ENCODE measurements at regions of chr17 and their contacts with region 1.

Region 1: DNA sequence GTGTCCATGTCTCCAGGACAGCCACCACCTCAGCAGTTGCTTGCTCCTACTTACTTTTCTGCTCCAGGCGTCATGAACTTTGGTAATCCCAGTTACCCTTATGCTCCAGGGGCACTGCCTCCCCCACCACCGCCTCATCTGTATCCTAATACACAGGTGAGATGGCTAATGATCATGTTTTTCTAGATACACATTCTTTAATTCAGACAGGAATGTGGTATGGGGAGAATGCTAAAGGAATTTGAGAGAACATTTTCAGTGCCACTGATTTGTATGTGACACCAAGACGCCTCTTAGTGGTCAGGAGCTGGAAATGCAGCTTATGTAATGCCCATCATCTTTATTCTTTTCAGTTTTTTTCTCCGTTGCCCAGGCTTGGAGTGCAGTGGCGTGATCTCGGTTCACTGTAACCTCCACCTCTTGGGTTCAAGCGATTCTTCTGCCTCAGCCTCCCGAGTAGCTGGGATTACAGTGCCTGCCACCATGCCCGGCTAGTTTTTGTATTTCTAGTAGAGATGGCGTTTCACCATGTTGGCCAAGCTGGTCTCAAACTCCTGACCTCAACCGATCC is 8.9 kb upstream of the RAPGEFL1 start:
- DNase-seq: peak; percentile 88
- H3K4me3 Mint-ChIP-seq: no peak overlapping the region
- H3K27ac Mint-ChIP-seq: peak overlapping the region; percentile 4
- H3K4me1 Mint-ChIP-seq: peaks cover 17% of the 10 kb centered on the region
- H3K27me3 Mint-ChIP-seq: no peaks in the 10 kb centered on the region
- CTCF ChIP-seq: no peak

Region 2: DNA sequence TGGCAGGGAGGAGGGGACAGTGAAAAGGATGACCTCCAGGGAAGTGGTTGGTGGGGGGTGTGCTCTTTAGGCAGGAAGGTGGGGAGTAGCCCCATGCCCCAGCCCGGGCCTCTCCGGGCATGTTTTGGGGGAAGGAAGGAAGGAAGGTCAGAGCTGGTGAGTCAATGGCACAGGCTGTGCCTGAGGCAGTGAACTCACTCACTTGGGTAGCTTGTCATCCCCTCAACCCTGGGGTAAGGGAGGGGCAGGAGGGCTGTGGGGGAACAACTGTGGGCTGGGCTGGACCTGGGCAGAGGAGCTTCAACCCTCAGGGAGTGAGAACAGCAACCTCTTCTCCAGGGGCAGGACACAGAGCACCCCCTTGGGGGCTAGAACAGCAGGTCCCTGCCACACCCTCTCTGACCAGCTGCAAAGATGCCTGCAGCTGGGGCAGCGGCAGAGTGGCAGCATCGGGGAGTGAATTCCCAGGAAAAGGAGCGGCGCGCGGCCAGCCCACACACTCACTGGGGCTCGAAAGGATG is 146.8 kb before region 1 on chr17:
- CTCF ChIA-PET with region 1: interaction called, 24 read pairs
- intact Hi-C with region 1: no loop called
- DNase-seq: peak; percentile 88
- H3K4me3 Mint-ChIP-seq: no peak overlapping the region
- H3K27ac Mint-ChIP-seq: no peak overlapping the region
- H3K4me1 Mint-ChIP-seq: peaks cover 36% of the 10 kb centered on the region
- H3K27me3 Mint-ChIP-seq: peaks cover 23% of the 10 kb centered on the region
- CTCF ChIP-seq: no peak

Region 3: DNA sequence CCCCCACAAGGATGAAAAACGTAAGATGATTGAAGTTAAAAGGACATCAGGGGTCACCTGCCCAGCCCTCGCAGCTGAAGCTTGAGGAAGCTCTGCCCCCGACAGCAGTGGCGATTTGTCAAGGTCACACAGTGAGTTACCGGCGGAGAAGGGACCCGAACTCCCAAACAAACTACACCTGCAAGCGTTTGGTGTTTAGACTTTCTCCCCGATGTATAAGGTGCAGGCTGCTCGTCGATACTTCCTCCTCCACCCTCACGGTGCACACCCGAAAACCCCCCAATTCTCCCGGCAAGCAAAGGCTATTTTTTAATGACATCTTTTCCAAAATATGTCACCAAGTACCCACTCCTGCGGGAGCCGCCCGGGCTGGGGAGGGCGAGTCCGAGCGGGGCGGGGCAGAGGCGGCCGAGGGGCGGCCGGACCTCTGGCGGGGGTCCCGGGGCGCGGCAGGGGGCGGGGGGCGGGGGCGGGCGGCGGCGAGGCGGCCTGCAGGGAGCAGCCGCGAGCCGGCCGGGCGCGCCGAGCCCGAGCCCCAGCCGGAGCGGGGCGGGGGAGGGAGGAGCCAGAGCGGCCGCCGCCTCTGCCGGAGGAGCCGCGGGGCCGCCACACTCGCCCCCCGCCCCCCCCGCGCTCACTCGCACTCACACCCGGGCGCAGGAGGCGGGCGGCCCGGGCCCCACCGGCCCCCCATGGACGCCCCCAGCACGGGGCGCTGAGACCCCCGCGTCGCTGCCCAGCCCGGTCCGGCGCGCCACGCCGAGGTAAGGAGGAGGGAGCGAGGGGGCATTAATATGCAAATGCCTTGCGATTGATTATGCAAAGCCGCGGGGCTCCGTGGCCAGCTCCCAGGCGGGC is 105.8 kb before region 1 on chr17 and contains the start of gene THRA:
- CTCF ChIA-PET with region 1: interaction called, 11 read pairs
- intact Hi-C with region 1: loop called (anchors 1 kb)
- DNase-seq: peak; percentile 100
- H3K4me3 Mint-ChIP-seq: peak within 1 kb of the TSS; percentile 54
- H3K27ac Mint-ChIP-seq: peak within 1 kb of the TSS; percentile 27
- H3K4me1 Mint-ChIP-seq: peaks cover 55% of the 10 kb centered on the region
- H3K27me3 Mint-ChIP-seq: peaks cover 52% of the 10 kb centered on the region
- CTCF ChIP-seq: no peak
- total RNA-seq, gene THRA: 107 and 133 TPM in 2 replicates

Region 4: GRCh38 chr17:40086150-40087044 is 82.0 kb before region 1 on chr17:
- CTCF ChIA-PET with region 1: interaction called, 19 read pairs
- intact Hi-C with region 1: no loop called
- DNase-seq: peak; percentile 100
- H3K4me3 Mint-ChIP-seq: no peak overlapping the region
- H3K27ac Mint-ChIP-seq: no peak overlapping the region
- H3K4me1 Mint-ChIP-seq: no peaks in the 10 kb centered on the region
- H3K27me3 Mint-ChIP-seq: no peaks in the 10 kb centered on the region
- CTCF ChIP-seq: no peak

Region 5: GRCh38 chr17:40121181-40122135 is 46.9 kb before region 1 on chr17 and contains the start of gene MSL1:
- CTCF ChIA-PET with region 1: interaction called, 462 read pairs
- intact Hi-C with region 1: loop called (anchors 2 kb)
- DNase-seq: peak; percentile 100
- H3K4me3 Mint-ChIP-seq: peak within 1 kb of the TSS; percentile 86
- H3K27ac Mint-ChIP-seq: peak within 1 kb of the TSS; percentile 53
- H3K4me1 Mint-ChIP-seq: peaks cover 48% of the 10 kb centered on the region
- H3K27me3 Mint-ChIP-seq: no peaks in the 10 kb centered on the region
- CTCF ChIP-seq: no peak
- total RNA-seq, gene MSL1: 505 and 524 TPM in 2 replicates

Region 6: GRCh38 chr17:40151414-40151963 is 16.9 kb before region 1 on chr17:
- CTCF ChIA-PET with region 1: interaction called, 55 read pairs
- intact Hi-C with region 1: no loop called
- DNase-seq: no peak
- H3K4me3 Mint-ChIP-seq: no peak overlapping the region
- H3K27ac Mint-ChIP-seq: no peak overlapping the region
- H3K4me1 Mint-ChIP-seq: peaks cover 5% of the 10 kb centered on the region
- H3K27me3 Mint-ChIP-seq: no peaks in the 10 kb centered on the region
- CTCF ChIP-seq: no peak

Region 7: GRCh38 chr17:40191237-40192208 is 23.2 kb after region 1 on chr17:
- CTCF ChIA-PET with region 1: interaction called, 145 read pairs
- intact Hi-C with region 1: no loop called
- DNase-seq: no peak
- H3K4me3 Mint-ChIP-seq: no peak overlapping the region
- H3K27ac Mint-ChIP-seq: no peak overlapping the region
- H3K4me1 Mint-ChIP-seq: no peaks in the 10 kb centered on the region
- H3K27me3 Mint-ChIP-seq: no peaks in the 10 kb centered on the region
- CTCF ChIP-seq: no peak

Region 8: GRCh38 chr17:40251576-40251975 is 83.2 kb after region 1 on chr17:
- CTCF ChIA-PET with region 1: no interaction called
- intact Hi-C with region 1: no loop called
- DNase-seq: no peak
- H3K4me3 Mint-ChIP-seq: no peak overlapping the region
- H3K27ac Mint-ChIP-seq: peak overlapping the region; percentile 10
- H3K4me1 Mint-ChIP-seq: peaks cover 30% of the 10 kb centered on the region
- H3K27me3 Mint-ChIP-seq: no peaks in the 10 kb centered on the region
- CTCF ChIP-seq: no peak

Measured in Calu3 (cell line).